Aorta (tissue), 5 donors: ENCODE measurements at regions of chr11 and their contacts with region 1.

Region 1: GRCh38 chr11:19903620-19904069 is 191.0 kb downstream of the NAV2 start:
- DNase-seq: peak; percentile 82 to 85
- ATAC-seq: peak; percentile 85
- H3K4me3 ChIP-seq: no peak overlapping the region
- H3K27ac ChIP-seq: peak overlapping the region in 1 of 2 donors; percentile 74
- H3K4me1 ChIP-seq: peaks cover 0 to 7% of the 10 kb centered on the region in 2 donors
- H3K27me3 ChIP-seq: no peaks in the 10 kb centered on the region

Region 2: GRCh38 chr11:19561011-19561410 is 342.6 kb before region 1 on chr11:
- intact Hi-C with region 1: loop called (anchors 2 to 5 kb)
- DNase-seq: no peak
- ATAC-seq: no peak
- H3K4me3 ChIP-seq: no peak overlapping the region
- H3K27ac ChIP-seq: no peak overlapping the region
- H3K4me1 ChIP-seq: no peaks in the 10 kb centered on the region
- H3K27me3 ChIP-seq: no peaks in the 10 kb centered on the region

Region 3: DNA sequence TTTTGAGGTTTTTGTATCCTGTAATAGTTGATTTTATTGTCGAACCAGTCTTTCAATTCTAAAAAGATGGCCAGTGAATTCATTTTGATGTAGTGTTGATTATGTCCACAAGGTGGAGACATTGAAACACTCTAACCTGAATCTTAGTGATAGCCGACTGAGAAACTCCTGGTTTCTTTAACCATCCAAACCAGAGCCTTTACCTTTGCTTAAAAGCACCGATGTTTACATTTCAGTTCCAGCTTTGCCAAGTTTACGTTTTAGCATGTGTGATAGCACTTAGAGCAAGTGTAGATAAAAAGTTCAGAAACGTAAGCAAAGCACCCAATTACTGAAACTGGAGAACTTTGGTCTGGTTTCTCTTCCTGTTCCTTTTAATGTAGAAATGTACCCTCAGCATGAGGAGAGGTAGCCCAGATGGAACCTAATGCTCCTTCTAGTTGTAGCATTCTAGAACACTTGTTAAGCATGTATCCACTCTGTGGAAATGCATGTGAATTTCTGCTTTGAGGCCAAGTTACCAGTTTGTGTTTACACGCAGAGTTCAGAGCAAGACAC is 48.0 kb after region 1 on chr11:
- intact Hi-C with region 1: loop called in 1 of 2 experiments (anchors 5 kb)
- DNase-seq: no peak
- ATAC-seq: no peak
- H3K4me3 ChIP-seq: no peak overlapping the region
- H3K27ac ChIP-seq: no peak overlapping the region
- H3K4me1 ChIP-seq: peaks cover 6 to 11% of the 10 kb centered on the region in 2 donors
- H3K27me3 ChIP-seq: no peaks in the 10 kb centered on the region

Region 4: GRCh38 chr11:20011307-20011951 is 107.8 kb after region 1 on chr11:
- intact Hi-C with region 1: no loop called
- DNase-seq: no peak
- ATAC-seq: no peak
- H3K4me3 ChIP-seq: no peak overlapping the region
- H3K27ac ChIP-seq: no peak overlapping the region
- H3K4me1 ChIP-seq: peaks cover 2 to 21% of the 10 kb centered on the region in 2 donors
- H3K27me3 ChIP-seq: no peaks in the 10 kb centered on the region